A673 (cell line): ENCODE measurements at regions of chr4 and their contacts with region 1.

Region 1: GRCh38 chr4:175536852-175537453 is 275.1 kb downstream of the GPM6A start:
- DNase-seq: peak; percentile 71
- H3K4me3 ChIP-seq: no peak overlapping the region
- H3K27ac ChIP-seq: no peak overlapping the region
- H3K4me1 ChIP-seq: no peaks in the 10 kb centered on the region
- H3K27me3 ChIP-seq: no peaks in the 10 kb centered on the region
- CTCF ChIP-seq: peak; percentile 68

Region 2: GRCh38 chr4:174365018-174365587 is 1171.8 kb before region 1 on chr4:
- CTCF ChIA-PET with region 1: no interaction called
- POLR2A ChIA-PET with region 1: no interaction called
- intact Hi-C with region 1: loop called (anchors 5 kb)
- DNase-seq: peak; percentile 55
- H3K4me3 ChIP-seq: no peak overlapping the region
- H3K27ac ChIP-seq: no peak overlapping the region
- H3K4me1 ChIP-seq: no peaks in the 10 kb centered on the region
- H3K27me3 ChIP-seq: no peaks in the 10 kb centered on the region
- CTCF ChIP-seq: peak; percentile 70

Region 3: GRCh38 chr4:174631901-174632758 is 904.8 kb before region 1 on chr4:
- CTCF ChIA-PET with region 1: no interaction called
- POLR2A ChIA-PET with region 1: no interaction called
- intact Hi-C with region 1: loop called (anchors 10 kb)
- DNase-seq: peak; percentile 75
- H3K4me3 ChIP-seq: no peak overlapping the region
- H3K27ac ChIP-seq: no peak overlapping the region
- H3K4me1 ChIP-seq: peaks cover 7% of the 10 kb centered on the region
- H3K27me3 ChIP-seq: no peaks in the 10 kb centered on the region
- CTCF ChIP-seq: peak; percentile 90

Region 4: GRCh38 chr4:174789666-174790065 is 747.3 kb before region 1 on chr4:
- CTCF ChIA-PET with region 1: no interaction called
- POLR2A ChIA-PET with region 1: interaction called, 15 read pairs
- intact Hi-C with region 1: no loop called
- DNase-seq: no peak
- H3K4me3 ChIP-seq: no peak overlapping the region
- H3K27ac ChIP-seq: no peak overlapping the region
- H3K4me1 ChIP-seq: no peaks in the 10 kb centered on the region
- H3K27me3 ChIP-seq: no peaks in the 10 kb centered on the region
- CTCF ChIP-seq: no peak

Region 5: GRCh38 chr4:175282407-175282806 is 254.5 kb before region 1 on chr4:
- CTCF ChIA-PET with region 1: no interaction called
- POLR2A ChIA-PET with region 1: no interaction called
- intact Hi-C with region 1: loop called (anchors 10 kb)
- DNase-seq: no peak
- H3K4me3 ChIP-seq: no peak overlapping the region
- H3K27ac ChIP-seq: no peak overlapping the region
- H3K4me1 ChIP-seq: no peaks in the 10 kb centered on the region
- H3K27me3 ChIP-seq: no peaks in the 10 kb centered on the region
- CTCF ChIP-seq: no peak